GM23248 (cell line): ENCODE measurements at regions of chr18 and their contacts with region 1.

Region 1: GRCh38 chr18:79644006-79644665 is 35.5 kb upstream of the CTDP1 start:
- DNase-seq: peak; percentile 65
- H3K4me3 ChIP-seq: no peak overlapping the region
- H3K27ac ChIP-seq: no peak overlapping the region
- H3K4me1 ChIP-seq: no peaks in the 10 kb centered on the region
- H3K27me3 ChIP-seq: peaks cover 8% of the 10 kb centered on the region; the same call in 1 of the 2 replicates

Region 2: GRCh38 chr18:79380816-79381806 is 263.0 kb before region 1 on chr18:
- in situ Hi-C with region 1: loop called (anchors 5 kb)
- DNase-seq: peak; percentile 67
- H3K4me3 ChIP-seq: no peak overlapping the region
- H3K27ac ChIP-seq: no peak overlapping the region
- H3K4me1 ChIP-seq: no peaks in the 10 kb centered on the region
- H3K27me3 ChIP-seq: no peaks in the 10 kb centered on the region

Region 3: DNA sequence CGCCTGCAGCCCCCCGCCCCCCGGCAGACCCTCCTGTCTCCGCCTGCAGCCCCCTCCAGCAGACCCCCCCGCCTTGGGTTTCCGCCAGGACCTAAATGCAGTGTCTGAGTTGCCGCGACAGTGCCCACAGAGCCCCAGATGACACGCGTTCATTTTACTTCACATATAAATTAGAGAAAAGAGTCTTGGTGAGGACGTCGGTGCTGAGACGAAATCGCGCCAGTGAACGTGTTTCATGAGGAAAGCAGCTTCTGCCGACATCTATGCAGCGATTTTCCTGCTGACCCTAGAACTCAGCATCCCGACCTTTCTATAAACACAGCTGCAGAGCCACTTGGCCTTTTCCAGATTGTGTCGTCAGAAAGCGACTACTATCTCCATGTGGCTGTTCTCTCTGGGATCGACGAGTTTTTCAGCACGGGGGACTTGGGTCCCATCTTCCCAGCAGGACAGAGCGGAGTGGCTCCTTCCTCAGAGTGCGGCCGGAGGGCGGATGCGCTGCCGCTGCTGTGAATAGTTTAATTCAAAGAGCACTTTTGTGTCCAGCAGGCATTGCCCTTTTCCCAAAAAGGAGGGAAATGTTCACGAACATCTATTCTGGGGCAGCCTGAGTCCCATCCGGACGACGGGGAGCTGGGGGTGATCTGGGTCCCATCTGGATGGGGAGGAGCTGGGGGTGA is 111.7 kb before region 1 on chr18:
- in situ Hi-C with region 1: loop called (anchors 10 kb)
- DNase-seq: no peak
- H3K4me3 ChIP-seq: no peak overlapping the region
- H3K27ac ChIP-seq: no peak overlapping the region
- H3K4me1 ChIP-seq: no peaks in the 10 kb centered on the region
- H3K27me3 ChIP-seq: peaks cover 27% of the 10 kb centered on the region; the same call in 1 of the 2 replicates